ENCODE measurements at regions of chr1 and their contacts with region 1.

Region 1: GRCh38 chr1:181089677-181090409 is 1.3 kb downstream of the IER5 start:
- DNase-seq: no peak
- H3K4me3 ChIP-seq: peak overlapping the region; percentile 72
- CTCF ChIP-seq: no peak

Region 2: GRCh38 chr1:180994262-180994661 is 95.6 kb before region 1 on chr1:
- in situ Hi-C with region 1: loop called (anchors 5 kb)
- DNase-seq: no peak
- H3K4me3 ChIP-seq: no peak overlapping the region
- CTCF ChIP-seq: no peak

Region 3: DNA sequence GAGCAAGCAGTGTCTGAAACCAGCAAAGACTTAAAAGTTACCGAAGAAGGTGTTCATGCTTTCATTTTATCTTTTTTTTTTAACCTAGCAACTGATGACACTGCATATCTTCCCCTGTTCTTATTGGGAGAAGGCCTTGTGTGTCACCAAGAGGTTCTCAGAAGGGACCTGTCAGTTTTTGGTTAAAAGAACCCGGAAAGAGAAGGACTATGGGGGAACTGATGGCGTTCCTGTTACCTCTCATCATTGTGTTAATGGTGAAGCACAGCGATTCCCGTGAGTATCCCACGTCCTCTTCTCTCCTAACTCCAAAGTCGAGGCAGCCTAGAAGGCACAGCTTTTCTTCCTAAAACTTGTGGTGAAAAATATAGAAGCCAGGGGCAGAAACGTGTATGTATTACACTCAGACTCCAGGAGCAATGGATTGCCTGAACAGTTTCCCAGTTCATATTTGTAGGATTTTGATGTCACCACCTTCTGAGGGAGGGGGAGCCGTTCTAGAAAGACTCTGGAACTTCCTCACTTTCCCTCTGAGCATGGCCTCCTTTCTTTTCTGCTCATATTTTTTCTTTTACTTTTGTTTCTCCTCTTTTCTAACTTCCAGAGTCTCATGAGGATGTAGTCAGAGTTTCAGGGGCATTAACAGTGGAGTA is 55.9 kb before region 1 on chr1 and contains the start of gene MR1:
- in situ Hi-C with region 1: loop called (anchors 5 kb)
- DNase-seq: peak; percentile 41
- H3K4me3 ChIP-seq: no peak within 1 kb of the TSS
- CTCF ChIP-seq: no peak

Region 4: GRCh38 chr1:181128592-181129497 is 39.0 kb after region 1 on chr1:
- in situ Hi-C with region 1: loop called (anchors 5 kb)
- DNase-seq: no peak
- H3K4me3 ChIP-seq: no peak overlapping the region
- CTCF ChIP-seq: no peak

Region 5: DNA sequence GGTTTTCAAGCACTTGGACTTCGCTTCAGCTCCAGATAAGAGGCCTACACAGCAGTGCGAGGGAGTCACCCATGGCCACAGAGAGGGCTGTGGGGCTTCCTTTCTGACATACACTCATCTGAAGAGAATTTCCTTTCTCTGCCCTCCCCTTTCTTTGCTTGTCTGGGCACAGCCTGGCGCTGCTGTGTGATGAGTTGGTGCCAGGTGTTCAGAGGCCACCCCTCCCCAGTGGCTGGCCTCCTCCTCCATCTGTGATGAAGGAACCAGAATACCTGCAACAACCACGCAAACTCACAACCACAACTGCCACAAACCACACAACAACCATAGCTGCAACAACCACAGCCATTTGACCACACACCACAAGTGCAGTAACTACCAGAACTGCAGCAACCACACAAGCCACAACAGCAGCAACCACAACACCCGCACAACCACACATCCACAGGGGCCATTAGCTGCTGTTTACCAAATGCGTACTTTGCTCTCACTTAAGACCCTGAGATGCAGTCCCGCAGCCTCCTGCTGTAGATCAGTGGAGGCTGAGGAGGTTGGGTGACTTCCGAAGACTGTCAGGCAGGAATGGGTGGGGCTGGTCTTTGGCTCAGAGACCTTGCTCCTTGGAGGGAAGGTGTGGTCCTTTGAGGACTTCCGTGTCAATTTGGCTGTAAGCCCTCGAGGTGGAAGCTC is 69.8 kb after region 1 on chr1:
- in situ Hi-C with region 1: loop called (anchors 5 kb)
- DNase-seq: no peak
- H3K4me3 ChIP-seq: no peak overlapping the region
- CTCF ChIP-seq: no peak